Mammary epithelial cell (primary cell): ENCODE measurements at regions of chr1 and their contacts with region 1.

Region 1: DNA sequence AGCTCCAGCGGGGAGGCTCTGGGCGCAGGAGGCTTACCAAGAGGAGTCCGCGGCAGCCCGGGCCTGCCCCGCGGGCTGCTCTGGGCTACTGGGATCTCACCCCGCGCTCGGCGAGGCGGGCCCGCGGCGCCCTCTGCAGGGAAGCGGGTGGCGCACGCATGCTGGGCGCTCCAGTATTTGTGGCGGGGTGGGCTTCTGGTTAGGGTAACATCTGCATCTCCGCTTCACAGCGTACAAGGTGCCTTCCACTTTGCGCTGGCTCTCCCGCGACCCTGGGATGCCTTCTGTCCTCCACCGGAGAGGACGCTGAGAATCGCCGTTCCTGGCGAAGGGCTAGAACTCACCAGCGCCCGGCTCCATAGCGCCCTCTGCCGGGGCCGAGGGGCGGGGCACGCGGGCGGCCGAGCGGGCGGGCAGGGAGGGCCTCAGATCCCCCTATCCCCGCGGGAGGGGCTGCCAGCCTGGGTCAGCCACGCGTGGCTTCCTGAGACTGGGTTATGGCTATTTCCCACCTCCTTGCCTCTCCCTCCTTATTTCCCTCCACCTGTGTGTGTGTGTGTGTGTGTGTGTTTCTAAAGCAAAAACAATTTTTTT is 46.6 kb upstream of the CTBS start:
- DNase-seq: peak; percentile 70
- H3K4me3 ChIP-seq: peak overlapping the region; percentile 58 to 72 (median 64)
- H3K27ac ChIP-seq: peak overlapping the region; percentile 34
- H3K4me1 ChIP-seq: peaks cover 13% of the 10 kb centered on the region
- H3K27me3 ChIP-seq: no peaks in the 10 kb centered on the region
- CTCF ChIP-seq: peak; percentile 55 to 77

Region 2: DNA sequence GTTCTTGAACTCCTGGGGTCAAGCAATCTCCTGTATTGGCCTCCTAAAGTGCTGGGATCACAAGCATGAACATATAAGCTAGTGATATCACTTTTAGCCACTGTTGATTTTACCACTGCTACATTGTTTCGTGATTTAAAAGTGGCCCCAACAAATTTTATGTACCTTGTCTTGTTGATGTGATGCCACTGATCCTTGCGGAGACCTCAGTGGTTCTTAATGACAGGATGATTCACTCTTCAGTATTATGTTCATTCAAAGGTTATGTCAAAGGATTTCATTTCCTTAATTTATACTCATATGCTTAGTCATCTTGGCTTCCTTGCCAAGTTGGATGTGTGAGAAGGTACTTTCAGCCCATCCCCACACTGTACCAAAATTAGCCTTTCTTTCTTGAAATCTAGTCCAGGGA is 464.6 kb before region 1 on chr1:
- CTCF ChIA-PET with region 1: no interaction called
- dilution Hi-C with region 1: no loop called
- in situ Hi-C with region 1: loop called in 1 of 2 experiments (anchors 25 kb)
- intact Hi-C with region 1: no loop called
- DNase-seq: peak; percentile 80
- H3K4me3 ChIP-seq: no peak overlapping the region
- H3K27ac ChIP-seq: no peak overlapping the region
- H3K4me1 ChIP-seq: peaks cover 5% of the 10 kb centered on the region
- H3K27me3 ChIP-seq: no peaks in the 10 kb centered on the region
- CTCF ChIP-seq: no peak

Region 3: GRCh38 chr1:84506002-84506728 is 114.7 kb before region 1 on chr1 and contains the starts of genes GNG5 and SPATA1:
- CTCF ChIA-PET with region 1: no interaction called
- dilution Hi-C with region 1: no loop called
- in situ Hi-C with region 1: loop called in 1 of 2 experiments (anchors 10 kb)
- intact Hi-C with region 1: loop called (anchors 1 kb)
- DNase-seq: peak; percentile 95
- H3K4me3 ChIP-seq: peak within 1 kb of the TSS; percentile 85 to 98 (median 95)
- H3K27ac ChIP-seq: peak within 1 kb of the TSS; percentile 92
- H3K4me1 ChIP-seq: peaks cover 16% of the 10 kb centered on the region
- H3K27me3 ChIP-seq: no peaks in the 10 kb centered on the region
- CTCF ChIP-seq: no peak
- total RNA-seq, gene GNG5: 20.5 to 115 TPM
- total RNA-seq, gene SPATA1: 0.33 to 1.4 TPM

Region 4: GRCh38 chr1:84763912-84764663 is 143.3 kb after region 1 on chr1:
- CTCF ChIA-PET with region 1: no interaction called
- dilution Hi-C with region 1: no loop called
- in situ Hi-C with region 1: loop called in 1 of 2 experiments (anchors 10 kb)
- intact Hi-C with region 1: no loop called
- DNase-seq: no peak
- H3K4me3 ChIP-seq: no peak overlapping the region
- H3K27ac ChIP-seq: no peak overlapping the region
- H3K4me1 ChIP-seq: peaks cover 4% of the 10 kb centered on the region
- H3K27me3 ChIP-seq: no peaks in the 10 kb centered on the region
- CTCF ChIP-seq: no peak